Activated naive CD4-positive, alpha-beta T cell treated with anti-CD3 and anti-CD28 coated beads for 36 hours (primary cell): ENCODE measurements at regions of chr10 and their contacts with region 1.

Region 1: GRCh38 chr10:19788075-19788686 is 28.1 kb upstream of the PLXDC2 start:
- DNase-seq: peak; percentile 28
- H3K4me3 Mint-ChIP-seq: no peak overlapping the region
- H3K27ac Mint-ChIP-seq: no peak overlapping the region
- H3K4me1 Mint-ChIP-seq: no peaks in the 10 kb centered on the region
- H3K27me3 Mint-ChIP-seq: peaks cover 2% of the 10 kb centered on the region

Region 2: GRCh38 chr10:18689498-18689897 is 1098.7 kb before region 1 on chr10:
- CTCF ChIA-PET with region 1: no interaction called
- intact Hi-C with region 1: loop called (anchors 10 kb)
- DNase-seq: no peak
- H3K4me3 Mint-ChIP-seq: no peak overlapping the region
- H3K27ac Mint-ChIP-seq: no peak overlapping the region
- H3K4me1 Mint-ChIP-seq: no peaks in the 10 kb centered on the region
- H3K27me3 Mint-ChIP-seq: peaks cover 2% of the 10 kb centered on the region